ENCODE measurements at regions of chr16 and their contacts with region 1.

Region 1: GRCh38 chr16:48481772-48482171 is 96.6 kb upstream of the SIAH1 start:
- DNase-seq: no peak
- ATAC-seq: peak; percentile 27
- H3K4me3 ChIP-seq: no peak overlapping the region
- H3K27ac ChIP-seq: no peak overlapping the region
- H3K4me1 ChIP-seq: peaks cover 5% of the 10 kb centered on the region; the same call in 1 of the 2 replicates
- H3K27me3 ChIP-seq: peaks cover 4% of the 10 kb centered on the region
- CTCF ChIP-seq: no peak
- POLR2A ChIP-seq: no peak
- RAD21 ChIP-seq: no peak

Region 2: GRCh38 chr16:48335951-48336350 is 145.8 kb before region 1 on chr16:
- CTCF ChIA-PET with region 1: no interaction called
- POLR2A ChIA-PET with region 1: no interaction called
- dilution Hi-C with region 1: no loop called
- in situ Hi-C with region 1: no loop called
- intact Hi-C with region 1: no loop called
- DNase-seq: peak; percentile 91
- ATAC-seq: peak; percentile 98
- H3K4me3 ChIP-seq: no peak overlapping the region
- H3K27ac ChIP-seq: peak overlapping the region; percentile 98; the same call in 1 of the 2 replicates
- H3K4me1 ChIP-seq: peaks cover 12% of the 10 kb centered on the region
- H3K27me3 ChIP-seq: no peaks in the 10 kb centered on the region
- CTCF ChIP-seq: no peak
- POLR2A ChIP-seq: no peak
- RAD21 ChIP-seq: no peak

Region 3: GRCh38 chr16:48499923-48500381 is 18.2 kb after region 1 on chr16:
- CTCF ChIA-PET with region 1: no interaction called
- POLR2A ChIA-PET with region 1: interaction called, 11 read pairs
- dilution Hi-C with region 1: no loop called
- in situ Hi-C with region 1: no loop called
- intact Hi-C with region 1: no loop called
- DNase-seq: peak; percentile 93
- ATAC-seq: peak; percentile 40; the same call in 1 of the 2 replicates
- H3K4me3 ChIP-seq: no peak overlapping the region
- H3K27ac ChIP-seq: peak overlapping the region; percentile 23; the same call in 1 of the 2 replicates
- H3K4me1 ChIP-seq: peaks cover 26% of the 10 kb centered on the region
- H3K27me3 ChIP-seq: no peaks in the 10 kb centered on the region
- CTCF ChIP-seq: no peak
- POLR2A ChIP-seq: no peak
- RAD21 ChIP-seq: no peak

Region 4: GRCh38 chr16:48535831-48536613 is 54.2 kb after region 1 on chr16:
- CTCF ChIA-PET with region 1: no interaction called
- POLR2A ChIA-PET with region 1: no interaction called
- dilution Hi-C with region 1: no loop called
- in situ Hi-C with region 1: no loop called
- intact Hi-C with region 1: no loop called
- DNase-seq: peak; percentile 31
- ATAC-seq: peak; percentile 83
- H3K4me3 ChIP-seq: no peak overlapping the region
- H3K27ac ChIP-seq: peak overlapping the region; percentile 51
- H3K4me1 ChIP-seq: peaks cover 21% of the 10 kb centered on the region
- H3K27me3 ChIP-seq: no peaks in the 10 kb centered on the region
- CTCF ChIP-seq: no peak
- POLR2A ChIP-seq: no peak
- RAD21 ChIP-seq: no peak

Region 5: DNA sequence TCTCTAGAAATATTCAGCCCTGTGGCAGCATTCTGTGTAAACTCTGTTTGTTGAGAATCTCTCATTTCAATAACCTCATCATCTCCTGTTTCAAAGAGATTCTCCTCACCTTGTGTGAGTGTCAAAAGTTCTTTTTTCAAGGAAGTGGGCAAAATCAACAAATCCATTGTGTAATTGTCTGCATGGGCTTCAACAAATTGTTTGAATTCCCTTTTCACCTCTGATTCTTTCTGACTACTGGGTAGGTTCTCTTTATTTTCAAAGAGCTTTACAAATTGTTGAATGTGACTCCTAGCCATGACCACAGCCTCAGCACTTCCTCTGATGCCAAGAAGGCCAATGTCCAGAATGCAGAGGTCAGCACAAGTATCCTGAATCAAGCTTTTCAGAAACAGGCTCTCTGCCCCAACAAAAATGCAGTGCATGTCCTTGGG is 80.2 kb after region 1 on chr16:
- CTCF ChIA-PET with region 1: no interaction called
- POLR2A ChIA-PET with region 1: no interaction called
- dilution Hi-C with region 1: no loop called
- in situ Hi-C with region 1: no loop called
- intact Hi-C with region 1: no loop called
- DNase-seq: peak; percentile 31
- ATAC-seq: peak; percentile 46; the same call in 1 of the 2 replicates
- H3K4me3 ChIP-seq: no peak overlapping the region
- H3K27ac ChIP-seq: no peak overlapping the region
- H3K4me1 ChIP-seq: peaks cover 7% of the 10 kb centered on the region
- H3K27me3 ChIP-seq: no peaks in the 10 kb centered on the region
- CTCF ChIP-seq: no peak
- POLR2A ChIP-seq: no peak
- RAD21 ChIP-seq: no peak

Measured in IMR-90 (cell line).